ENCODE measurements at regions of chr3 and their contacts with region 1.

Region 1: DNA sequence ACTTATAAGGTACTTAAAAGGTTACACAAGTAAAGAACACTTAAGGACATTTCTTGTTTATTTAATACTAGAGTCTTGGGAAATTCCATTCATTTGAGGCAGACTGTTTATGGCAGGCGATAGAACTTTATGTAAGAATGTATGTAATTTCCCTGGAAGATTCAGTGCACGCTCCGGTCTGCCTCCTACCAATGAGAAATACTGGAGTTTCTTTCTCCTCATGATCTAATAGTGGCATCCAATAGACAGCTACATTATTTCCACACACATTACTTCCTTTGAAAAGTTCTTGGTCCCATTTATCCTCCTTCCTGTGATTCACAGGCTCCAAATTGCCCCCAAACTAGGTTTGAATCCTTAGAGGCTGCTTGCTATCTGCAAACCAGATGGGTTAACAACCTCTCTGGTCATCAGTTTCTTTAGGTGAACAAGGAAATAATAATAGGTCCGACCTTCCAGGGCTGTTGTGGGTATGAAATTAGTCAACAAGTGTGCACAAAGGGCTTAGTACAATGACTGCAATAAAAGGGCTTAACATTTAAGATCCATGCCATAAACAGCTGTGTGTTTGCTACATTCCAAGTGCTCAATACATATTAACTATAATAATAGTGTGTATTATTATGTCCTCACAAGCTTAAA is 30.7 kb downstream of the EIF4E3 start:
- DNase-seq: no peak
- ATAC-seq: no peak
- H3K4me3 ChIP-seq: no peak overlapping the region
- H3K27ac ChIP-seq: no peak overlapping the region
- H3K4me1 ChIP-seq: no peaks in the 10 kb centered on the region
- H3K27me3 ChIP-seq: peaks cover 0 to 1% of the 10 kb centered on the region in 2 experiments; a peak in 1 of 4 replicates
- CTCF ChIP-seq: no peak
- EP300 ChIP-seq: no peak
- POLR2A ChIP-seq: no peak
- RAD21 ChIP-seq: no peak

Region 2: GRCh38 chr3:71681224-71681668 is 13.2 kb before region 1 on chr3:
- CTCF ChIA-PET with region 1: interaction called, 18 read pairs
- POLR2A ChIA-PET with region 1: no interaction called
- RAD21 ChIA-PET with region 1: interaction called, 4 read pairs
- SMC1A ChIA-PET with region 1: no interaction called
- in situ Hi-C with region 1: no loop called
- intact Hi-C with region 1: no loop called
- DNase-seq: no peak
- ATAC-seq: peak; percentile 89
- H3K4me3 ChIP-seq: no peak overlapping the region
- H3K27ac ChIP-seq: no peak overlapping the region
- H3K4me1 ChIP-seq: no peaks in the 10 kb centered on the region
- H3K27me3 ChIP-seq: peaks cover 0 to 6% of the 10 kb centered on the region in 2 experiments; a peak in 2 of 4 replicates
- CTCF ChIP-seq: peak; percentile 62 to 77 (median 64)
- EP300 ChIP-seq: no peak
- POLR2A ChIP-seq: no peak
- RAD21 ChIP-seq: peak; percentile 74